ENCODE measurements at regions of chr15 and their contacts with region 1.

Region 1: DNA sequence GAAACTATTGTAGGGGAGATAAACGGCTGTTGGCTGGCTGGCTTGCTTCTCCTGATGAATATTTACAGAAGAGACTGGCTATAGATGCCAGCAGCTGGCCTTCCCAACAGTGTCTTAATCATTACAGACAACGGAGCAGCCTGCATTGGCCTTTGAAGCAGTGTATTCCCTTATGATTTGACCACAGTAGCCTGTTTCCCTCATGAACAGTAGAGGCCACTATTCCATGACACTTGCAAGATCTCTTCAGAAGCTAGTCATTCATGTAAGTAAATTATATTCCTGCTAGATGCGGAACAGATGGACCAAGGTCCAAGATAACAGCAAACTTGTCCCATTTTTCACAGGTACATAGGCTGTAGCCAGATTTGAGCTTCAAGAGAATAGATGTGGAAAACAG is 47.3 kb downstream of the TMCO5A start:
- DNase-seq: no peak
- H3K4me3 Mint-ChIP-seq: no peak overlapping the region
- H3K27ac Mint-ChIP-seq: no peak overlapping the region
- H3K4me1 Mint-ChIP-seq: no peaks in the 10 kb centered on the region
- H3K27me3 Mint-ChIP-seq: no peaks in the 10 kb centered on the region
- CTCF ChIP-seq: no peak

Region 2: DNA sequence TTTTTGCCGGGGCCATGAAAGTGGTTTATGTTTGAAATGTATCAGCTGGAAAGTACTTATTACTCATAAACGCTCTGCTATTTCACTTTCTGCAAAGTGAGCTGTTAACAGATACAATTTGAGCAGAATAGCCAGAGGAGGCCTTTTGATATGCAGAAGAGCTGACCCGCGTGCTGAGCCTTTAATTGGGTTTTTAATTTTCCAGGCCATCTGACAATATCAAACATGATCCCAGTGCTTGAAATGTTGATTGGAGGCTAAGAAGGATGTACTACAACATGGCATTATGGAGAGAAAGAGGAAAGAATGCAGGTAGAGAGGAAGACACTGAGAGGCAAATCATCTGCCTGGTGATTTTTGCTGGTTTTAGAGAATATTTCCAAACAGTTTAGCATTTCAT is 620.2 kb before region 1 on chr15:
- CTCF ChIA-PET with region 1: no interaction called
- intact Hi-C with region 1: no loop called
- DNase-seq: no peak
- H3K4me3 Mint-ChIP-seq: no peak overlapping the region
- H3K27ac Mint-ChIP-seq: no peak overlapping the region
- H3K4me1 Mint-ChIP-seq: no peaks in the 10 kb centered on the region
- H3K27me3 Mint-ChIP-seq: no peaks in the 10 kb centered on the region
- CTCF ChIP-seq: no peak

Region 3: DNA sequence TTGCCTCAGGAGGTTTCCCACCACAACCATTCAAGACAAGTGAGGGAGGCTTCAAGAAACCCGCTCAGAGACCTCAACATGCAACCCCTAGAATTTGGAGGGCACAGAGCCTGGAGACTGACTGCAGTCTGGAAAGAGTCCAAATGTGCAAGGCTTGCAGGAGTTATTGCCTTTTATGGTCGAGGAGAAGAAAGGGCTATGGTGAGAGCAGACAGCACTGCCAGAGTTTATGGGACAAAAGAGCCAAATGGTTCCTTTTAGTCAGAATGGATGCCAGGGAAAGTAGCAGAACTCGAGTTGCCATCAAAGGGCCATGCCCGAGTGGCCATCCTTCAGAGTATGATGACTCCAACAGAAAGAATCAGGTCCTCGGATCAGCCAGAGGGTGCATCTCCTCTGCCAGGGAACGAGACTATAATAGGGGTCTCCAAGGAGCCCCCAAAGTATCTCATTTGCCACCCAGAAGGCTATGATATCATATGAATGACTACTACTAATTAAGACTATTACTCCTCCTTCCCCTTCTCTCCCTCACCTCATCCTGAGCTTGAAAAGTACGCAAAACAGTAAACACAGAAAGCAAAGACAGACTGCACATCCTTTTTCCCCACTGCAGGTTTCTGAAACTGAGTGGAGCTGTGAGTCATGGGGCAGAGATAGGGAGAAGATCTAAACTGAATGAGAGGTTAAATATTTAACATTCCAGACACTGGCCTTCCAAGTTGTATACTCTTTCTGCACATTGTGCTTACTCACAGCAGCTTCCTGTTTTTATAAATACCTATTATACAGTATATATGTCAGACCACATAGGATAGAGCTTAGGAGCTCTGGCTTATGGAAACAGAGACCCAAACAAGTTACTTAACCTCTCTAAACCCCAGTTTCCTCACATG is 81.2 kb before region 1 on chr15:
- CTCF ChIA-PET with region 1: no interaction called
- intact Hi-C with region 1: loop called (anchors 5 kb)
- DNase-seq: no peak
- H3K4me3 Mint-ChIP-seq: no peak overlapping the region
- H3K27ac Mint-ChIP-seq: no peak overlapping the region
- H3K4me1 Mint-ChIP-seq: peaks cover 18% of the 10 kb centered on the region
- H3K27me3 Mint-ChIP-seq: no peaks in the 10 kb centered on the region
- CTCF ChIP-seq: no peak

Measured in Calu3 (cell line).